ENCODE measurements at regions of chr20 and their contacts with region 1.

Region 1: GRCh38 chr20:14744723-14745122 is 407.3 kb upstream of the FLRT3 start:
- DNase-seq: no peak
- H3K4me3 ChIP-seq: no peak overlapping the region
- H3K27ac ChIP-seq: no peak overlapping the region
- H3K4me1 ChIP-seq: no peaks in the 10 kb centered on the region
- H3K27me3 ChIP-seq: no peaks in the 10 kb centered on the region
- CTCF ChIP-seq: no peak
- POLR2A ChIP-seq: no peak

Region 2: GRCh38 chr20:14612391-14612790 is 132.3 kb before region 1 on chr20:
- intact Hi-C with region 1: no loop called
- DNase-seq: no peak
- H3K4me3 ChIP-seq: no peak overlapping the region
- H3K27ac ChIP-seq: no peak overlapping the region
- H3K4me1 ChIP-seq: no peaks in the 10 kb centered on the region
- H3K27me3 ChIP-seq: no peaks in the 10 kb centered on the region
- CTCF ChIP-seq: no peak
- POLR2A ChIP-seq: no peak

Region 3: DNA sequence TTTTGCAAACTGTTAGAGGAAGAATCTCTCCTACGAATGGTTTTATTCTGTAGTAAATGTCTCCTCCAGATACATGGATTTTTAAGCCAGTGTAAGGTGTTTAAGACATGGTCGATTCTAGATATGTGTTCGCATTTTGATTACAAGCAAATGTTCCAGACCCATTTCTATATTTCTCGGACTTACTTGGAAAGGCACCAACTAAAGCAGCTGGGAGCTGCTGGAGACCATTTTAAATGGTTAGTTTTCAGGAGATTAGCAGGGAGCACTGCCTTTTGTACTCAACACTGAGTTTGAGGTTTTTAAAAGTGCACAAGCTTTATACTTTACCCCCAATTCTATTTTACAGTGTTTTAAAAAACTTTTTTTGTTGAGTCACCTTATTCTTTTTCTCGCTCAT is 971.5 kb after region 1 on chr20:
- intact Hi-C with region 1: loop called (anchors 5 kb)
- DNase-seq: no peak
- H3K4me3 ChIP-seq: no peak overlapping the region
- H3K27ac ChIP-seq: no peak overlapping the region
- H3K4me1 ChIP-seq: no peaks in the 10 kb centered on the region
- H3K27me3 ChIP-seq: no peaks in the 10 kb centered on the region
- CTCF ChIP-seq: no peak
- POLR2A ChIP-seq: no peak